Panc1 (cell line): ENCODE measurements at regions of chr1 and their contacts with region 1.

Region 1: GRCh38 chr1:226344441-226345259 is 35.7 kb upstream of the LIN9 start:
- DNase-seq: no peak
- ATAC-seq: no peak
- H3K4me3 ChIP-seq: no peak overlapping the region
- H3K27ac ChIP-seq: no peak overlapping the region
- H3K4me1 ChIP-seq: no peaks in the 10 kb centered on the region
- H3K27me3 ChIP-seq: no peaks in the 10 kb centered on the region
- CTCF ChIP-seq: no peak

Region 2: GRCh38 chr1:226287583-226287982 is 57.1 kb before region 1 on chr1:
- CTCF ChIA-PET with region 1: no interaction called
- POLR2A ChIA-PET with region 1: no interaction called
- in situ Hi-C with region 1: no loop called
- intact Hi-C with region 1: no loop called
- DNase-seq: no peak
- ATAC-seq: no peak
- H3K4me3 ChIP-seq: no peak overlapping the region
- H3K27ac ChIP-seq: no peak overlapping the region
- H3K4me1 ChIP-seq: no peaks in the 10 kb centered on the region
- H3K27me3 ChIP-seq: no peaks in the 10 kb centered on the region
- CTCF ChIP-seq: no peak

Region 3: DNA sequence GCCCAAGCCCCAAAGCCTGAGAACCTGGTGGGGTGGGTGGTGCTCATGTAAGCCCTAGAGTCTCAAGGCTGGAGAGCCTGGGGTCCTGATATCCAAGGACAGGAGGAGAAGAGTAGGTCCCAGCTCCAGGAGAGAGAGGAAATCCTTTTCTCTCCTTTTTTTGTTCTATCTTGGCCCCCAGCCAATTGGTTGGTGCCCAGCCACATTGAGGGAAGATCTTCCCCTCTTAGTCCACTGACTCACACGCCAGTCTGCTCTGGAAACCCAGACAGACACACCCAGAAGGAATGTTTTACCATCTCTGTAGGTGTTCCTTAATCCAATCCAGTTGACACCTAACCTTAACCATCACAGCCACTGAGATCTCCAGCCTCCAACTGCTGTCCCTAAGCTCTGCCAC is 19.5 kb before region 1 on chr1:
- CTCF ChIA-PET with region 1: interaction called, 3 read pairs
- POLR2A ChIA-PET with region 1: interaction called, 11 read pairs
- in situ Hi-C with region 1: no loop called
- intact Hi-C with region 1: no loop called
- DNase-seq: no peak
- ATAC-seq: no peak
- H3K4me3 ChIP-seq: no peak overlapping the region
- H3K27ac ChIP-seq: no peak overlapping the region
- H3K4me1 ChIP-seq: no peaks in the 10 kb centered on the region
- H3K27me3 ChIP-seq: no peaks in the 10 kb centered on the region
- CTCF ChIP-seq: no peak